Calu3 (cell line): ENCODE measurements at regions of chr1 and their contacts with region 1.

Region 1: DNA sequence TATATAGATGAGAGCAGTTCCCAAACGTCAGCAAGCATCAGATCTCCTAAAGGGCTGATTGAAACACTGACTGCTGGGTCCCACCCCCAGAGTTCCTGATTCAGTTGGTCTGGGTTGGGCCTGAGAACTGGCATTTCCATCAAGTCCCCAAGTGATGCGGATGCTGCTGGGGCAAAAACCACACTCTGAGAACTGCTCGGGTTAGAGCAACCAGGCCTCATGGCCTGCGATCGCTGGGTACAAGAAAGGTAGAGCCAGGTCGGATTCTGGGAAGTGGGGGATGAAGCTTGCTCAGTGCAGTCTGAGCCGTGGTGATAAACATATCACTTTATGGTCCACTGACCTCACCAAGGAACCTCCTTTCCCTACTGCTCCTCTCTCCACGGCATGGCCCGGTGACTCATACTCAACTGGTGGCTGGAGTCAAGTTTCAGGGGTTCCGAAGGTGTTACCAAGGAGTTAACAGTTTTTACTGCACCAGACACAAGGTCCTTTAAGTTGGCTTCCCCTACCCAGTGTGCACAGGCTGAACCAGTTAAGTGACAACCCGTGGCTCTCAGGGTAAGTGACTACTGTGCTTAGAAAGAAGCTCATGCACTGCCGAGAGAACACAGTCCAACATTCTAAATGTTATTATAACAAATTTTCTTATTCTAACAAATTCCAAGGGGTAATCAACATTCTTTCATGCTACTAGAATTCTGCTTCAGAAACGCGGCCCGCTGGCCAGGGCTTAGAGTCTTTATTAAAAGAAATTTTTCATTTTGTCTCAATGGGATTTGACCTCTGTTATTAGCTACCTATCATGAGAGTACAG is 153.5 kb downstream of the TGFBR3 start:
- DNase-seq: peak; percentile 79
- H3K4me3 Mint-ChIP-seq: peak overlapping the region; percentile 53
- H3K27ac Mint-ChIP-seq: peak overlapping the region; percentile 76
- H3K4me1 Mint-ChIP-seq: peaks cover 68% of the 10 kb centered on the region
- H3K27me3 Mint-ChIP-seq: no peaks in the 10 kb centered on the region
- CTCF ChIP-seq: no peak

Region 2: DNA sequence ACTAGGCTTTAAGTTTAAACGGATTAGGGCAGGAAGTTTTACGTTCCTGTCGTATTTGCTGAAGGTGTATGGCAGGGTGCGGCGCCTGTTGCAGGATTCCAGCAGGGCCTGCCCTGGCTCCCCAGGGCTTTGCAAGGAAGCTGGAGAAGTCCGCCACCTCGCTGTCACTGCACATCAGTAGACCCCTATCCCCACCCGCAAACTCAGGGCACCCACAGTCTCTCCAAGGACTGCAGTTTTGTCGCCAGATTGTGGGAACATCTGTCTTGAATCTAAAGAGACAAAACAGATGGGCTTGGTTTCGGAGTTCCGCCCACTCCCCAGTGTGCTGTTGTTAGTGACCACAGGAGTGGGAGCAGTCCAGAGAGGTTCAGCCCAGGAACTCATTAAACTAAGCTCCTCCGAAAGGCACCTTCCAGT is 121.0 kb before region 1 on chr1:
- CTCF ChIA-PET with region 1: interaction called, 4 read pairs
- intact Hi-C with region 1: loop called (anchors 5 kb)
- DNase-seq: peak; percentile 79
- H3K4me3 Mint-ChIP-seq: peak overlapping the region; percentile 43
- H3K27ac Mint-ChIP-seq: peak overlapping the region; percentile 64
- H3K4me1 Mint-ChIP-seq: peaks cover 58% of the 10 kb centered on the region
- H3K27me3 Mint-ChIP-seq: no peaks in the 10 kb centered on the region
- CTCF ChIP-seq: no peak

Region 3: DNA sequence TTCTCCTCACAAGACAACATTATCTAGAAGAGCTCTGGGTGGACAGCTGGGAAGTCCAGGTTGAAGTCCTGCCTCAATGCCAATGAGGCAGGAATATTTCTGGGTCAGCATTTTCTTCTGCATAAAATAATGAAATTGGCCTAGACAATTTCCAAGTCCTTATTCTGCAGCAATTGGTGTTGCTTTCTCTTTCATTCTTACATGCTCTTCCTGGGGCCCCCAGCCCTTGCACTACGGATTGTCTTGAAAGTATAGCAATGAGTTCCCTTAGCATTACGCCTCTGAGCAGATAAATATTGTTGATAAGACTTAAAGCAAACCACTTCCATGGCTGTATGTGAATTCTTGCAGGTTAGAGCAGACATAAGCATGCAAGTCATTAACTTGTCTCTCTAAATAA is 35.1 kb before region 1 on chr1:
- CTCF ChIA-PET with region 1: no interaction called
- intact Hi-C with region 1: no loop called
- DNase-seq: no peak
- H3K4me3 Mint-ChIP-seq: no peak overlapping the region
- H3K27ac Mint-ChIP-seq: no peak overlapping the region
- H3K4me1 Mint-ChIP-seq: no peaks in the 10 kb centered on the region
- H3K27me3 Mint-ChIP-seq: no peaks in the 10 kb centered on the region
- CTCF ChIP-seq: no peak

Region 4: DNA sequence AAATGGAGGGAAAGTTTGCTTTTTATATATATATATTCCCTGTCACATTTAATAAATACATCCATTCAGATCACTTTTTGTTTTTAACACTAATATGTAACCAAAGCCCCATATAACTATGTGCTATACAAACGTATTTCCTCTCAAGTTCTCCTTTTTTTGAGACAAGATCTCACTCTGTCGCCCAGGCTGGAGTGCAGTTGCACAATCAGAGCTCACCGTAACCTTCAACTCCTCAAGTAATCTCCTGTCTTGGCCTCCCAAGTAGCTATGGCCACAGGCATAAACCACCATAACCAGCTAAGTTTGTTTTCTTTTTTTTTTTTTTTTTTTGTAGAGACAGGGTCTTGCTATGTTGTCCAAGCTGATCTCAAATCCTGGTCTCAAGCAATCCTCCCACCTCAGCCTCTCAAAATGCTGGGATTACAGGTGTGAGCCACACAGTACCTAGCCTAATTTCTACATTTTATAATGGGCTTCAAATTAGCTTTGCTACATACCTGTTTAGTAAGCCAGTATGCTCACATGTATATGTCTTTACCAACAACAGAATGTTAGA is 33.5 kb after region 1 on chr1:
- CTCF ChIA-PET with region 1: no interaction called
- intact Hi-C with region 1: loop called (anchors 2 kb)
- DNase-seq: no peak
- H3K4me3 Mint-ChIP-seq: no peak overlapping the region
- H3K27ac Mint-ChIP-seq: no peak overlapping the region
- H3K4me1 Mint-ChIP-seq: peaks cover 57% of the 10 kb centered on the region
- H3K27me3 Mint-ChIP-seq: no peaks in the 10 kb centered on the region
- CTCF ChIP-seq: no peak

Region 5: GRCh38 chr1:91885716-91886506 is 153.4 kb after region 1 on chr1 and contains the start of gene TGFBR3:
- CTCF ChIA-PET with region 1: no interaction called
- intact Hi-C with region 1: loop called (anchors 10 kb)
- DNase-seq: peak; percentile 90
- H3K4me3 Mint-ChIP-seq: peak within 1 kb of the TSS; percentile 99
- H3K27ac Mint-ChIP-seq: peak within 1 kb of the TSS; percentile 77
- H3K4me1 Mint-ChIP-seq: peaks cover 40% of the 10 kb centered on the region
- H3K27me3 Mint-ChIP-seq: no peaks in the 10 kb centered on the region
- CTCF ChIP-seq: peak; percentile 37
- total RNA-seq, gene TGFBR3: 7.7 and 10.8 TPM in 2 replicates